Caco-2 (cell line): ENCODE measurements at regions of chr10 and their contacts with region 1.

Region 1: GRCh38 chr10:17655567-17656146 is 11.7 kb downstream of the STAM start:
- DNase-seq: no peak
- H3K4me3 ChIP-seq: no peak overlapping the region
- H3K4me3 Mint-ChIP-seq: peak overlapping the region; percentile 47
- H3K27ac Mint-ChIP-seq: peak overlapping the region; percentile 90
- H3K4me1 ChIP-seq: peaks cover 47% of the 10 kb centered on the region
- H3K4me1 Mint-ChIP-seq: peaks cover 35% of the 10 kb centered on the region
- H3K27me3 ChIP-seq: no peaks in the 10 kb centered on the region
- H3K27me3 Mint-ChIP-seq: no peaks in the 10 kb centered on the region
- CTCF ChIP-seq: no peak

Region 2: DNA sequence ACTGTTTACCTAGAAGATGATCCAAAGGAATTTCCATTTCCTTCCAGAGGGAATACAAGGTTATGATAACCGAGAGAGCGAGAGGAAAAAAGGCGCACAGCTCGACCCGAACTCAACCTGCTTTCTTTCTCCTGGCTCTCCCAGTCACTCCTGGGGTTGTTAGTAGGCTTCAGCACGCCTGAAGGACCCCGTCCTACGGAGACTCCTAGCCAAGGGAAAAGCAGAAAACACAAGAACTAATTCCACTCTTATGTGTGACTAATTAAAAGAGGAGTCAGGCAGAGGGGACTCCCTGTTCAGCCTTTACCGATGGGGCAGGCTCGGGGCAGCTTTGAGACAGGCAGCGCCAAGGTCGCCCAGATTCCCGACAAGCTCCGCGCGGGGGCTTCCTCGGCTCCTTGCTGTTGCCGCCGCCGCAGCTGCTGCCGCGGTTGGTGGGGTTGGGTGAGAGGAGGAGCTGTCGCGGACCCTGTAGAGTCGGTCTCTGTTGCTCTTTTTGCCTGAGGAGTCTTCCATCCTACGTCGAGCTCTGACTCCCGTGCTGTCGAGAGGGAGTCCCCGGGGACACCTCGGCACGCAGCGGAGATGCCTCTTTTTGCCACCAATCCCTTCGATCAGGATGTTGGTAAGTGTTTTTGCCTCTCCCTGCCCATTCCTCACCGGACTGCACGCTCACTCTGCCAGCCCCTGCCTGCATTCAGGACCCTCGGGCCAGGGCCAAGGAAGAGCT is 11.7 kb before region 1 on chr10 and contains the start of gene STAM:
- CTCF ChIA-PET with region 1: no interaction called
- POLR2A ChIA-PET with region 1: interaction called, 10 read pairs
- intact Hi-C with region 1: loop called (anchors 1 kb)
- DNase-seq: peak; percentile 96
- H3K4me3 ChIP-seq: peak within 1 kb of the TSS; percentile 58
- H3K4me3 Mint-ChIP-seq: peak within 1 kb of the TSS; percentile 94
- H3K27ac Mint-ChIP-seq: peak within 1 kb of the TSS; percentile 100
- H3K4me1 ChIP-seq: peaks cover 11% of the 10 kb centered on the region
- H3K4me1 Mint-ChIP-seq: peaks cover 22% of the 10 kb centered on the region
- H3K27me3 ChIP-seq: no peaks in the 10 kb centered on the region
- H3K27me3 Mint-ChIP-seq: no peaks in the 10 kb centered on the region
- CTCF ChIP-seq: no peak
- total RNA-seq, gene STAM: 51.9 and 59.1 TPM in 2 replicates

Region 3: GRCh38 chr10:17709492-17709891 is 53.8 kb after region 1 on chr10:
- CTCF ChIA-PET with region 1: no interaction called
- POLR2A ChIA-PET with region 1: no interaction called
- intact Hi-C with region 1: loop called (anchors 5 kb)
- DNase-seq: no peak
- H3K4me3 ChIP-seq: no peak overlapping the region
- H3K4me3 Mint-ChIP-seq: no peak overlapping the region
- H3K27ac Mint-ChIP-seq: no peak overlapping the region
- H3K4me1 ChIP-seq: peaks cover 5% of the 10 kb centered on the region; the same call in 1 of the 2 replicates
- H3K4me1 Mint-ChIP-seq: no peaks in the 10 kb centered on the region
- H3K27me3 ChIP-seq: no peaks in the 10 kb centered on the region
- H3K27me3 Mint-ChIP-seq: no peaks in the 10 kb centered on the region
- CTCF ChIP-seq: no peak